ENCODE measurements at regions of chr9 and their contacts with region 1.

Region 1: GRCh38 chr9:29211580-29212396 is 1638.5 kb upstream of the C9orf72 start:
- DNase-seq: peak in 6 of 10 donors; percentile 10 to 80 (median 54)
- H3K4me3 ChIP-seq: peak overlapping the region; percentile 42 to 75 (median 62)
- H3K27ac ChIP-seq: peak overlapping the region in 16 of 59 donors; percentile 3 to 72 (median 40)
- H3K27me3 ChIP-seq: peaks cover 0 to 52% (median 24%) of the 10 kb centered on the region in 45 donors
- CTCF ChIP-seq: peak in 54 of 56 donors; percentile 33 to 88 (median 70)

Region 2: DNA sequence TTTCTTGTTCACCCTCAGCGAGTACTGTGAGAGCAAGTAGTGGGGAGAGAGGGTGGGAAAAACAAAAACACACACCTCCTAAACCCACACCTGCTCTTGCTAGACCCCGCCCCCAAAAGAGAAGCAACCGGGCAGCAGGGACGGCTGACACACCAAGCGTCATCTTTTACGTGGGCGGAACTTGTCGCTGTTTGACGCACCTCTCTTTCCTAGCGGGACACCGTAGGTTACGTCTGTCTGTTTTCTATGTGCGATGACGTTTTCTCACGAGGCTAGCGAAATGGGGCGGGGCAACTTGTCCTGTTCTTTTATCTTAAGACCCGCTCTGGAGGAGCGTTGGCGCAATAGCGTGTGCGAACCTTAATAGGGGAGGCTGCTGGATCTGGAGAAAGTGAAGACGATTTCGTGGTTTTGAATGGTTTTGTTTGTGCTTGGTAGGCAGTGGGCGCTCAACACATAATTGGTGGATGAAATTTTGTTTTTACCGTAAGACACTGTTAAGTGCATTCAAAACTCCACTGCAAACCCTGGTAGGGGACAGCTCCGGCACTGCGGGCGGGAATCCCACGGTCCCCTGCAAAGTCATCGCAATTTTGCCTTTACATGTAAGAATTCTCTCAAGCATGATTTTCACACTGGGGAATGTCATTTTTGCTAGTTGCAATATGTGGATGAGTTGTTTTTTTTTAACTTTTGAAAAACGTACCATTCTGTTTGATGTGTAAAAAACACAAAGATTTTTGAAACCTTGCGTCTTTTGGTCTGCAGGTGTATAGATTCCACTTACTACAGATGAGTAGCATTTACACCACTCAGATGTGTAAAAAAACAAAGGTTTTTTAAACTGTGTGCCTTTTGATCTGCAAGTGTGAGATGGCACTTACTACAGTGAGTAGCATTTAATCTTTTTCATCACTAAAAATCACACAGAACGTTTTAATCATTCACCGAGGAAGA is 1637.9 kb before region 1 on chr9:
- intact Hi-C with region 1: loop called in 1 of 2 experiments (anchors 5 kb)
- DNase-seq: peak; percentile 83 to 99 (median 96)
- H3K4me3 ChIP-seq: peak overlapping the region; percentile 60 to 97 (median 87)
- H3K27ac ChIP-seq: peak overlapping the region; percentile 86 to 100 (median 98)
- H3K27me3 ChIP-seq: no peaks in the 10 kb centered on the region
- CTCF ChIP-seq: peak in 15 of 56 donors; percentile 2 to 26 (median 9)

Measured in dorsolateral prefrontal cortex (tissue), 120 donors.